MCF 10A (cell line): ENCODE measurements at regions of chr1 and their contacts with region 1.

Region 1: GRCh38 chr1:241834733-241835377 is 13.1 kb upstream of the EXO1 start:
- DNase-seq: peak; percentile 75
- H3K4me3 Mint-ChIP-seq: no peak overlapping the region
- H3K27ac Mint-ChIP-seq: peak overlapping the region; percentile 36
- H3K4me1 Mint-ChIP-seq: peaks cover 22% of the 10 kb centered on the region
- H3K27me3 Mint-ChIP-seq: no peaks in the 10 kb centered on the region
- CTCF ChIP-seq: peak; percentile 98

Region 2: GRCh38 chr1:241706954-241707365 is 127.9 kb before region 1 on chr1:
- CTCF ChIA-PET with region 1: interaction called, 4 read pairs
- POLR2A ChIA-PET with region 1: interaction called, 5 read pairs
- intact Hi-C with region 1: loop called (anchors 5 kb)
- DNase-seq: peak; percentile 97
- H3K4me3 Mint-ChIP-seq: peak overlapping the region; percentile 12
- H3K27ac Mint-ChIP-seq: peak overlapping the region; percentile 85
- H3K4me1 Mint-ChIP-seq: peaks cover 37% of the 10 kb centered on the region
- H3K27me3 Mint-ChIP-seq: no peaks in the 10 kb centered on the region
- CTCF ChIP-seq: no peak

Region 3: DNA sequence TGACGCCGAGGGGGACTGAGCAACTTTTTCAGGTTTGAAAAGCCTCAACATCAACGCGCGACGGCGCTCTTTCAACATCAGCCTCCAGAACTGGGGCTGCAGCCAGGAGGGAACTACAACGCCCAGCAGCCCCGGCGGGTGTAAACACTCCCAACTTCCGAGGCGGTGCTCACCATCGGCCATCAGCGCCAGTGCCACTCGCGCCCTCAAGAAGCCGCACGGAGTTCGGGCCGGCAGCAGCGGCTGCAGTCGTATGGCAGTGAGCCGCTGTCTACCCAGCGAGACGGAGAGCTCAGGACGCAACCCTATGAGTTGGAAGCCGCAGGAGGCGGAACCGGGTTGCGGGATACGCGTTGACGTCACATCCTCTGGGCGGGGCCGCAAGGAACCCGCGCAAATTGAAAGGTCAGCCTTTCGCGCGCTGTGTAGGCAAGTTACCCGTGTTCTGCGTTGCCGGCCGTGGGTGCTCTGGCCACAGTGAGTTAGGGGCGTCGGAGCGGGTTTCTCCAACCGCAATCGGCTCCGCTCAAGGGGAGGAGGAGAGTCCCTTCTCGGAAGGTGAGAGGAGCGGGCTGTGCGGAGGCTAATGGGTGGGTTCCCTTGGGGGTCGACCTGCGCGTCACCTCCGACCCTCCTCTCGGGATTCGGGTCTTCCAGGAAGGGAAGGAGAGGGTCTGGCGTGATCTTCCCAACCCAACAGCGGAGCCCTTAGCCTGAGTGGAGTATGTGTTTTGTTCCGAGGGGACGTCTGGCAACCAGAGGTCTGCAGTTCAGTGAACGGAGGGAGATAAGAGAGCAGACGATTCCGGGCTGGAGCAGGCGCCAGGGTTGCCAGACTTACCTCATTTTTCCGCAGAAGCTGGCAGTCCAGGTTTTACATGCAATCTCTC is 13.2 kb after region 1 on chr1 and contains the start of gene EXO1:
- CTCF ChIA-PET with region 1: interaction called, 18 read pairs
- POLR2A ChIA-PET with region 1: interaction called, 22 read pairs
- intact Hi-C with region 1: no loop called
- DNase-seq: peak; percentile 98
- H3K4me3 Mint-ChIP-seq: peak within 1 kb of the TSS; percentile 95
- H3K27ac Mint-ChIP-seq: peak within 1 kb of the TSS; percentile 81
- H3K4me1 Mint-ChIP-seq: peaks cover 18% of the 10 kb centered on the region
- H3K27me3 Mint-ChIP-seq: no peaks in the 10 kb centered on the region
- CTCF ChIP-seq: peak; percentile 38
- total RNA-seq, gene EXO1: 7.3 and 17.5 TPM in 2 replicates